ENCODE measurements at regions of chr1 and their contacts with region 1.

Region 1: DNA sequence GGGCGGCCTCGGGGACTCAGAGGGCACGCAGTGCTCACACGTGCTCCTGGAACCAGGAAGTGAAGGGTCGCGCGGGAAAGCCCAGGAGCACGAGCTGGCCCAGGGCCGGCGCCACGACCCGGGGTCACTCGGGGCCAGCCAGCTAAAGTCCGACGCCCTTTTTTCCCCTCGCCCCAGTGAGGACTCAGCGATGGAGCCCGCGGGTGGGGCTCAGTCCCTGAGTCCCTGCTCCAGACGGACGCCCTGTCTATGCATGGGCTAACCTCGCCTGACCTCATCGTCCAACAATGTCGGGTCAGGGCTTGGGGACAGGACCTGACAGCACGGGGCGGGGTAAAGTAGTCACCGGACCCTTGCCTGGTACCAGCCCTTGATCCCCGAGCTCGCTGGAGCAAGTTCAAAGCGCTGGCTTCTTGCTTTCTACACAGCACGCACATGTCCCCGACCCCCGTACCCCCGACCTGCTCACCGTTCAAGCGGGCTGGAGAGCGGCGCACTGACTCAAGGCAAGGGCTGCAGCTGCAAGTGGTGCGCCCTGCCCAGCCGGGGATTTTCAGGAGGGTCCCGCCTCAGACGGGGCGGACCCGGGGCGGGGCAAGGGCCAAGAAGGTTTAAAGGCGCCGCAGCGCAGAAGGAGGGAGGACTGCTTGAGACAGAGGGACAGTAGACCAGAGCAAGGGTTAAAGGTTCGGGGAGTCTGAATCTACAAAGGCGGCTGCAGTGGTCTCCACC is at the start of gene TAGLN2:
- DNase-seq: peak; percentile 76 to 95
- H3K4me3 ChIP-seq: peak within 1 kb of the TSS; percentile 74 to 83
- H3K27ac ChIP-seq: peak within 1 kb of the TSS; percentile 96 to 98
- H3K4me1 ChIP-seq: peaks cover 6 to 20% of the 10 kb centered on the region in 2 donors
- H3K27me3 ChIP-seq: no peaks in the 10 kb centered on the region
- CTCF ChIP-seq: no peak
- total RNA-seq, gene TAGLN2: 363 TPM

Region 2: DNA sequence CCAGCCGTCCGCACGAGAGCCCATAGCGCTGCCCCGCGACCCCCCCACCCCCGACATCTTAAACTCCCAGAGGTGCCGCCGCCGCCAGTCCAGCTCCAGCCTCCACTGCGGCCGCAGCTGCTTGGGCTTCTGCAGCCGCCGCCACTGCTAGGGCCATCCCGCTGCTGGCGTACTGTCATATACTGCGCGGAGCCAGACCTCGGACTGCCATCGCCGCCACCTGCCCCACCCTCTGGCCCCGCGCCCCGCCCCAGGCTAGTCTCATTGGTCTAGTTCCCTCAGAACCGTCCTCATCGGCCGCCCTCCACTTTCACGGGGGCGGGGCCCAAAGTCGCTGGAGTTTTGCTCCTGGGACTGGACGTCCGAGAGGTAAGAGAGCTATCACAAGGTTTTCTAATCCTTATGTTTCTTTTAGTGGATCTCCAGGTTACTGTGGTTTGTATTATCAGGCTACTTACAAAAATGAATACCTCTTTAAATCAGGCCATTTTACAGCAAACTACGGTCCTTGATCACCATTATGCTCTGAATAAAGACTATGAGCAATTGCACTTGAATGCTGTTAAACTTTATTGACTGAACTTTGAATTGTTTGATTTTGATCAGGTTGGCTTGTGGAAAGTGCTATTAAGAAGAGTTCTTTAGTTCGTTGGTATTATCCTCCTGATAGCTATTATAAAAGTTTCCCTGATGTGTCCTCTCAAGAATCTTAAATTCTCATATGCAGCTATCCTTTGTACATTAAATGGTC is 1747.3 kb before region 1 on chr1:
- intact Hi-C with region 1: loop called (anchors 10 kb)
- DNase-seq: peak; percentile 75 to 93
- H3K4me3 ChIP-seq: peak overlapping the region; percentile 51 to 70
- H3K27ac ChIP-seq: peak overlapping the region in 1 of 2 donors; percentile 3
- H3K4me1 ChIP-seq: peaks cover 0 to 8% of the 10 kb centered on the region in 2 donors
- H3K27me3 ChIP-seq: no peaks in the 10 kb centered on the region
- CTCF ChIP-seq: no peak

Region 3: DNA sequence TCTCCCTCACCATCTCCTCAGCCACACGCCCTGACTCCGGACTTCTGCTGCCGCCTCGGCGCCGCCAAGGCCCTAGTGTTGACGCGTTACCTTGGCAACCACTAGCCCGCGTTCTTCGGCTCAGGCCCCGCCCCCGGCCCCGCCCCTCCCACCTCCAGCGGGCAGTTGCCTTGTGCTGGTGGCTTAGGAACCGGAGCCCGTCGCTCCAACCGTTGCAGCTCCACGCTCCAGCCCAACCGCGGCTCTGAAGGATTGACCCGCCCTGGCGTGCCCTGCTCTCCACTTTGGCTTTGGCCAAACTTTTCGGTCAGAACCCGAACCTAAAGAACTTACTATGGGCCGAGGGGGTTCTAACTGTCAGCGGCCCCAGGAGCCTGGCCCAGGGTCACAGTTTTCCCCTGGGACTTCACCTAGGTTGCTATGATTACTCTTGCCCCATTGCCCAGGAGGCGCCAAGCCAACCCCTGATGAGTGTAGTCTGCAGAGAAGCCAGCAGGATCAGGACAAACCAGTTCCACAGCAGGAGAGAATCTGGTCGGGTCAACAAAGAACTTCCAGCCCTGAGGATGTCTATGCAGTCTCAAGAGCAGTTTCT is 25.0 kb before region 1 on chr1 and contains the start of gene CFAP45:
- intact Hi-C with region 1: loop called (anchors 1 kb)
- DNase-seq: peak; percentile 71 to 91
- H3K4me3 ChIP-seq: peak within 1 kb of the TSS in 1 of 2 donors; percentile 17
- H3K27ac ChIP-seq: peak within 1 kb of the TSS; percentile 51 to 66
- H3K4me1 ChIP-seq: peaks cover 3 to 10% of the 10 kb centered on the region in 2 donors
- H3K27me3 ChIP-seq: no peaks in the 10 kb centered on the region
- CTCF ChIP-seq: no peak
- total RNA-seq, gene CFAP45: not detected

Region 4: DNA sequence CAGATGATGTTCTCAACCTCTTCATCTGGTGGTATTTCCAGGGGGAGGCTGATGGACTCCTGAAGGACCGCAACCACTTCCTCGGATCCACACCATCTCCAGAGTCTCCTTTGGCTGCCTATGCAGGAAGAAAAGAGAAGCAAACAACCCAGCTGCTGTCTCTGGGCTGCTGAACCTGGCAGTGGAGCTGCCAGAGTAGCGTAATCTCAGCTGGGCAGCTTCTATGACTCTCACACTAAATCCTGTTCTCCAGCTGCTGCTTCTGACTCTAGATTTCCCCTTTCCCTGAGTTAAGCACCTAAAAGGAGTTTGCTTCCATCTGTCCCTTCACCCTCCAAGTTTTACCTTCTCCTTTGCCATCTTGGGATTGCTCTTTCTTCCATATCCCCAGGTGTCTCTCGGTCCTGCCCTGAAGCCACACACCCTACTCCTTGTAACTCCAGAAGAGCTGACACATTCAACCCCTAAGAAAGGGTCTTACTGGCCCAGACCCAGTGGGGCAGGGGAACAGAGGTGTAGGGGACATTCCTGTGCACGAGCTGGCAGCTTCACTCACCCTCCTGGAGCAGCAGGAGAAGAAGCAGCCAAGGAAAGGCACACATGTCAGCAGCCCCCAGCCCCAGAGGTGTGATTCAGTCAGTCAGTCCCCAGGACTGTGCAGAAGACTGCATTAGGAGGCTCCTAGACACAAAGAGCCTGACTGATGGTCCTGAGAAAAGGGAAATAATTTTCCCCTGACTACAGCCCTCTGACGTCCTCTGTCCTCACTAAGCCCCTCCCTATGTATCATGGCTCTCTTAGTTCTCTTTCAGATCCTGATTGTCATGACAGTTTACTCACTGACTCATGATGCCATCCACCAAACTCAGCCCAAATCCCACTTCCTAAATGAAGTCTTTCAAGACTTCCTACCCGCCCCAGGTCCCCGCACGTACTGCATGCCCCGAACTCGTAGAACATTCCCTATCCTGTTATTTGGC is 28.7 kb after region 1 on chr1 and contains the start of gene SLAMF9:
- intact Hi-C with region 1: no loop called
- DNase-seq: peak in 1 of 2 donors; percentile 43
- H3K4me3 ChIP-seq: no peak within 1 kb of the TSS
- H3K27ac ChIP-seq: no peak within 1 kb of the TSS
- H3K4me1 ChIP-seq: no peaks in the 10 kb centered on the region
- H3K27me3 ChIP-seq: no peaks in the 10 kb centered on the region
- CTCF ChIP-seq: no peak
- total RNA-seq, gene SLAMF9: not detected

Region 5: DNA sequence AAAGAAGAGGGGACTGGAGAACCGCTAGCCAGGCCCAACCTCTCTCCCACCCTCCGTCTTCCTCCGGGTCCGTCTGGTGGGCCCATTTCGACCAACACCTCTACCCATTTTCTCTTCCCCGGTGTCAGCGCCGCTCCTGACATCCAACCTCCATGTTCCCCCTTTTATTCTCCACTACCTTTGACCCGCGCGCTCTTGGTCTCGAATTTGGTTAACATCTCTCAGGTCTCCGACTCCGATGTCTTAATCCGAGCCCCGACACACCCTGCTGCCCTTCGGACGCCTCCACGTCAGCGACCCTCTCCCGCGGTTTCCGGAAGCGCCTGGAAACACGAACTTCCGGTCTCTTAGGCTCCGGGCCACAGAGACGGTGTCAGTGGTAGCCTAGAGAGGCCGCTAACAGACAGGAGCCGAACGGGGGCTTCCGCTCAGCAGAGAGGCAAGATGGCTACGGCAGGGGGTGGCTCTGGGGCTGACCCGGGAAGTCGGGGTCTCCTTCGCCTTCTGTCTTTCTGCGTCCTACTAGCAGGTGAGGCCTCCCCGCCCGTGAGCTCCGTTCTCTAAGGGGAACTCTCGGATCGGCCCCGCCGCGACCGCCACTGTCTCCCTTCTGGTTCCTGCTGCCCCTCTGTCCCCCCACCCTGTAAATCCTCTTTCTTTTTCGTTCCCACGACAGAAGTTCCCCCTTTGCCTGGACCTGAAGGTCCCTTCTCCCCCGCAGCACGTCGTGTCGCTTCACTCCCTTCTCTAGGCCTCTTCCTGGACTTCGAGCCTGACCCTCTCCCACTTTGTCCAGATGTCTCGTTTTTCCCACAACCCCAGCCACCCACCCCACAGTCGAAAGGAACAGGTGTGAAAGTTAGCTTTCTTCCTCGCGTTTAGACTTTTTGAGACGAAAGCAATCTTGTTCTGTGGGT is 418.1 kb after region 1 on chr1 and contains the starts of genes COPA and NCSTN:
- intact Hi-C with region 1: loop called (anchors 5 kb)
- DNase-seq: peak; percentile 71 to 97
- H3K4me3 ChIP-seq: peak within 1 kb of the TSS; percentile 56 to 87
- H3K27ac ChIP-seq: peak within 1 kb of the TSS; percentile 89 to 92
- H3K4me1 ChIP-seq: peaks cover 0 to 20% of the 10 kb centered on the region in 2 donors
- H3K27me3 ChIP-seq: no peaks in the 10 kb centered on the region
- CTCF ChIP-seq: no peak
- total RNA-seq, gene COPA: 56.3 TPM
- total RNA-seq, gene NCSTN: 141 TPM